ENCODE measurements at regions of chr2 and their contacts with region 1.

Region 1: DNA sequence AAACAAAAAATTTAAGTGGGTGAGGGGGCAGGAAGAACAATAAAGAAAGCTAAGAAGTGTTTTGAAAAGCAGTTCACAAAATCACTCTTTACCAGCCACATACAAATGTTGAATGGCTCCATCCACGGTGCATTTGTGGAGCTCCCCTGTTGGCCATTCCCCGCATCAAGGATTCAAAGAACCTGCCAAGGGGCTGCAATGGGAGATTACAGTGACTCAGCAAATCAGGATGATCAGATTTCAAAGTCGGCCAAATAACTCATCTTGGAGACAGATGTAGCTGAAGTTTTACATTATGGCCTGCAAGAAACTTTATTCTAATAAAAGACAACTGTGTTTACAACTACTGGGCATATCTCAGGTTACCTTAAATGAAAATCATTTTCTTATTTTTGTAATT is 26.9 kb downstream of the COL4A3 start:
- DNase-seq: no peak
- ATAC-seq: no peak
- H3K4me3 ChIP-seq: no peak overlapping the region
- H3K4me3 Mint-ChIP-seq: no peak overlapping the region
- H3K27ac ChIP-seq: no peak overlapping the region
- H3K27ac Mint-ChIP-seq: no peak overlapping the region
- H3K4me1 ChIP-seq: no peaks in the 10 kb centered on the region
- H3K4me1 Mint-ChIP-seq: no peaks in the 10 kb centered on the region
- H3K27me3 ChIP-seq: peaks cover 0 to 5% of the 10 kb centered on the region in 2 experiments
- H3K27me3 Mint-ChIP-seq: peaks cover 22 to 36% of the 10 kb centered on the region in 2 donors

Region 2: DNA sequence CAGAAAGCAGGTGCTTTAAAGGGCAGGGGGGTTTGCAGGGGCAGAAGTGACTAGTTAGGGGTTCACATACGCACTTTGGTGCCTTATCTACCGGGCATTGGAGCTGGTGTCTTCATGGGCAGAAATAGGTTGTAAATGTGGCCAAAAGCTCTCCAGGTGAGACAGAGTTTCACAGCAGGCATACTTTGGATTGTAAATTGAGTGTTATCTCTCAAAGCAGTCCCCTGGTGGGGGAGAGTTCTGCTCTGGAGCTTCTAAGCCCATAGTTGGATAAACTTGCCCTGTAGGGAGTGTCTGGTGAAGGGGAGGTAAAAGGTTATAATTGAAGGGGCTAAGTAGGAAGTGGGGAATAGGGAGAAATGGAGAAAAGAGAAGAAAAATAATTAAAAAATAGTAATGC is 16.2 kb after region 1 on chr2:
- CTCF ChIA-PET with region 1: interaction called in 1 of 2 experiments, 11 read pairs
- POLR2A ChIA-PET with region 1: no interaction called
- DNase-seq: no peak
- ATAC-seq: no peak
- H3K4me3 ChIP-seq: no peak overlapping the region
- H3K4me3 Mint-ChIP-seq: no peak overlapping the region
- H3K27ac ChIP-seq: no peak overlapping the region
- H3K27ac Mint-ChIP-seq: no peak overlapping the region
- H3K4me1 ChIP-seq: no peaks in the 10 kb centered on the region
- H3K4me1 Mint-ChIP-seq: no peaks in the 10 kb centered on the region
- H3K27me3 ChIP-seq: peaks cover 0 to 4% of the 10 kb centered on the region in 2 experiments
- H3K27me3 Mint-ChIP-seq: peaks cover 9 to 24% of the 10 kb centered on the region in 2 donors